Prostate gland (tissue), 2 donors: ENCODE measurements at regions of chr9 and their contacts with region 1.

Region 1: GRCh38 chr9:2494562-2494961 is 127.0 kb upstream of the VLDLR start:
- DNase-seq: no peak
- H3K4me3 ChIP-seq: no peak overlapping the region
- H3K27ac ChIP-seq: no peak overlapping the region
- H3K4me1 ChIP-seq: no peaks in the 10 kb centered on the region
- H3K27me3 ChIP-seq: no peaks in the 10 kb centered on the region
- CTCF ChIP-seq: no peak
- POLR2A ChIP-seq: no peak

Region 2: GRCh38 chr9:2260354-2261306 is 233.9 kb before region 1 on chr9:
- intact Hi-C with region 1: loop called (anchors 10 kb)
- DNase-seq: no peak
- H3K4me3 ChIP-seq: no peak overlapping the region
- H3K27ac ChIP-seq: no peak overlapping the region
- H3K4me1 ChIP-seq: no peaks in the 10 kb centered on the region
- H3K27me3 ChIP-seq: no peaks in the 10 kb centered on the region
- CTCF ChIP-seq: no peak
- POLR2A ChIP-seq: no peak